K562 (cell line): ENCODE measurements at regions of chr6 and their contacts with region 1.

Region 1: DNA sequence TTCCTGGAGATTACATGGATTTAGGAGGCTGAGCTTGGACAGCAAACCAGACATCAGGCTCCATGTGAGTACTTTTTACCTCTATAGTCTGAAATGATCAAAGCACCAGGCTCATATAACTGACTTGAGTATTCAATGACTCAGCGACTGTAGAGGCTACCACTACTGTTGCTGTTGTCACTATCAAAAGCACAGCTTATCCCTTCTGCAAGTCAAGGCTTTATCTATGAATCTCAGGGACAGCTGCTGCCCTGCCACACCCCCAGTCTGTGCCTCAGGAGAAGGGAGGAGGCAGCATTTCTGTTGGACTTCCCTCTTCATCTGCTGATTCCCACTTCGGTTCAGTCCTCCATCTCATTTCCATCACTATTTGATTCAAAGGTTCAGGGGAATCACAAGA is 80.5 kb upstream of the CNR1 start:
- DNase-seq: peak; percentile 27 to 77 (median 52)
- ATAC-seq: peak; percentile 93
- H3K4me3 ChIP-seq: no peak overlapping the region
- H3K27ac ChIP-seq: peak overlapping the region; percentile 16; the same call in 1 of the 3 replicates
- H3K4me1 ChIP-seq: peaks cover 0 to 13% of the 10 kb centered on the region in 2 experiments; a peak in 3 of 5 replicates
- H3K27me3 ChIP-seq: no peaks in the 10 kb centered on the region
- CTCF ChIP-seq: no peak
- EP300 ChIP-seq: peak; percentile 78
- POLR2A ChIP-seq: no peak
- RAD21 ChIP-seq: no peak

Region 2: GRCh38 chr6:88114838-88115237 is 131.8 kb before region 1 on chr6:
- CTCF ChIA-PET with region 1: no interaction called
- POLR2A ChIA-PET with region 1: no interaction called
- in situ Hi-C with region 1: no loop called
- intact Hi-C with region 1: no loop called
- DNase-seq: no peak
- ATAC-seq: no peak
- H3K4me3 ChIP-seq: no peak overlapping the region
- H3K27ac ChIP-seq: no peak overlapping the region
- H3K4me1 ChIP-seq: no peaks in the 10 kb centered on the region
- H3K27me3 ChIP-seq: no peaks in the 10 kb centered on the region
- CTCF ChIP-seq: no peak
- EP300 ChIP-seq: no peak
- POLR2A ChIP-seq: no peak
- RAD21 ChIP-seq: no peak

Region 3: DNA sequence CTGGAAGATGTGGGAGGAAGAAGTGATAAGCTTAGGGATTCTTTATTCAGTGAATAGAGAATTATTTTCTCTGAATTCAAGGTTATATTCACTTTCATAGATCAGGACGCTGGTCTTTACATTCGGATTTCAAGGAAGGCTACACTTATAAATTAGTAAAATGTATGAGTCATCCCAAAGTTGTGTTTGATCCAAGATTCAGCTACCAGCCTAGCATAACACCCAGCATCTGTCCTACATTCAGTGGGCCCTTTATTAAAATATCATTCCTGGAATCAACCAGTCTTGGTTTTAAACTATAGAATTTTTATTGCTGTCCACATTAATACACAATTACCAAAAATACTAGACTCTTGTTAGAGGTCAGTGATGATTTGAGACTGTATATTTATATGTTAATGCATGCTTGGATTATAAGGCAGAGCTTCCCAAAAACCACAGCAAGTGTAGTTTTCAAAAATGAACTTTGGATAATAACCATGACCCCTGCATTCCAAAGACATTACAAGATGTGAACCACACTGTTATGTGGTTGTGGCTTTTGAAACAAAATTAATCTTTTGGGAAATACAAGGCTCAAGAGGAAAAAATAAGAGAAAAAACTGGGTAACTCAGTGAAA is 130.2 kb after region 1 on chr6:
- CTCF ChIA-PET with region 1: no interaction called
- POLR2A ChIA-PET with region 1: no interaction called
- in situ Hi-C with region 1: no loop called
- intact Hi-C with region 1: loop called (anchors 2 kb)
- DNase-seq: no peak
- ATAC-seq: no peak
- H3K4me3 ChIP-seq: no peak overlapping the region
- H3K27ac ChIP-seq: no peak overlapping the region
- H3K4me1 ChIP-seq: peaks cover 0 to 28% of the 10 kb centered on the region in 2 experiments; a peak in 3 of 5 replicates
- H3K27me3 ChIP-seq: no peaks in the 10 kb centered on the region
- CTCF ChIP-seq: no peak
- EP300 ChIP-seq: no peak
- POLR2A ChIP-seq: no peak
- RAD21 ChIP-seq: no peak